ENCODE measurements at regions of chr7 and their contacts with region 1.

Region 1: GRCh38 chr7:143279186-143280098 is 5.3 kb upstream of the TMEM139 start:
- DNase-seq: no peak
- ATAC-seq: peak; percentile 79
- H3K4me3 Mint-ChIP-seq: peak overlapping the region; percentile 80
- H3K27ac Mint-ChIP-seq: peak overlapping the region; percentile 96
- H3K4me1 Mint-ChIP-seq: peaks cover 40% of the 10 kb centered on the region
- H3K27me3 Mint-ChIP-seq: no peaks in the 10 kb centered on the region
- CTCF ChIP-seq: no peak

Region 2: GRCh38 chr7:143172354-143172753 is 107.1 kb before region 1 on chr7:
- CTCF ChIA-PET with region 1: no interaction called
- POLR2A ChIA-PET with region 1: no interaction called
- intact Hi-C with region 1: no loop called
- DNase-seq: no peak
- ATAC-seq: no peak
- H3K4me3 Mint-ChIP-seq: no peak overlapping the region
- H3K27ac Mint-ChIP-seq: no peak overlapping the region
- H3K4me1 Mint-ChIP-seq: no peaks in the 10 kb centered on the region
- H3K27me3 Mint-ChIP-seq: peaks cover 7% of the 10 kb centered on the region
- CTCF ChIP-seq: no peak

Region 3: DNA sequence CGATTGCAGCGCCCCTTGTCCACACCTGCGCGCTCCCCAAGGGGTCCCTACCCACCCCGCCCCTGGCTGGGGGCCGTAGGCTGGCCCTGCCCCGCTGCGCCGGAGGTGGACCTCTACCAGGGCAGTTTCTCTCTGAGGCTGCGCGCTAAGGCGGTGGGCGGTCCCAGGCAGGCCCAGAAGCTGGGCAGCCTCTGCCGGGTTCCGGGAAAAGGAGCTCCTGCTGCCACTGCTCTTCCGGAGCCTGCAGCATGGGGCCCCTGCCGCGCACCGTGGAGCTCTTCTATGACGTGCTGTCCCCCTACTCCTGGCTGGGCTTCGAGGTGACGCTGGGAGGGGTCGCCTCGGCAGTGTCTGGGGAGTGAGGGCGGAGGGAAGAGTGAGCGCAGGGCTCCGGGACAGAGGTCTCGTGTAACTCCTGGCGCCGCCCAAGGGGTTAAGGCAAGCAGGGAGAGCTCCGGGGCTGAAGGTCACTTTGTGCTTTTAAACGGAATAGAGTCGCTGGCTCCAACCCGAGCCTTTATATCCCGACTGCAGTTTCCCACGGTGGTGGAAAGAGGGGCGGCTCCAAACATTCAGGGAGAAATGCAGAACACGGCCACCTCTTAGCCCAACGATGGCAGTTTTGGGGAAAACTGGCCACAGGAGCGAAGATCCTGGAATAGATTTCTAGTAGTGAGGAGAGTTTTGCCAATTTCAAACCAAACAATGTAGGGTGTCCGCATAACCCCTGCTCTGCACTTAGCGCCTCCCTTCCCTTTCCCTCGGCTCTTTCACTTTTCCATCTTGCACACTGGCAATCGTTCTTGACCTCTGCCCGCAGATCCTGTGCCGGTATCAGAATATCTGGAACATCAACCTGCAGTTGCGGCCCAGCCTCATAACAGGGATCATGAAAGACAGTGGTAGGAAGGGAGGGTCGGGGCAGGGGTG is 15.9 kb before region 1 on chr7 and contains the start of gene GSTK1:
- CTCF ChIA-PET with region 1: interaction called, 11 read pairs
- POLR2A ChIA-PET with region 1: interaction called, 72 read pairs
- intact Hi-C with region 1: no loop called
- DNase-seq: peak; percentile 86
- ATAC-seq: peak; percentile 96
- H3K4me3 Mint-ChIP-seq: peak within 1 kb of the TSS; percentile 90
- H3K27ac Mint-ChIP-seq: peak within 1 kb of the TSS; percentile 97
- H3K4me1 Mint-ChIP-seq: peaks cover 52% of the 10 kb centered on the region
- H3K27me3 Mint-ChIP-seq: no peaks in the 10 kb centered on the region
- CTCF ChIP-seq: no peak
- total RNA-seq, gene GSTK1: 163 to 171 TPM

Region 4: GRCh38 chr7:143305423-143306070 is 26.1 kb after region 1 on chr7:
- CTCF ChIA-PET with region 1: interaction called, 11 read pairs
- POLR2A ChIA-PET with region 1: interaction called, 3 read pairs
- intact Hi-C with region 1: no loop called
- DNase-seq: peak; percentile 86
- ATAC-seq: peak; percentile 86
- H3K4me3 Mint-ChIP-seq: no peak overlapping the region
- H3K27ac Mint-ChIP-seq: peak overlapping the region; percentile 58
- H3K4me1 Mint-ChIP-seq: peaks cover 46% of the 10 kb centered on the region
- H3K27me3 Mint-ChIP-seq: no peaks in the 10 kb centered on the region
- CTCF ChIP-seq: peak; percentile 82